Breast epithelium (tissue), 4 donors: ENCODE measurements at regions of chr4 and their contacts with region 1.

Region 1: GRCh38 chr4:21009956-21010355 is 309.7 kb downstream of the PACRGL start:
- DNase-seq: no peak
- H3K4me3 ChIP-seq: no peak overlapping the region
- H3K27ac ChIP-seq: no peak overlapping the region
- H3K4me1 ChIP-seq: no peaks in the 10 kb centered on the region
- H3K27me3 ChIP-seq: no peaks in the 10 kb centered on the region
- CTCF ChIP-seq: no peak
- POLR2A ChIP-seq: no peak

Region 2: GRCh38 chr4:21067351-21067750 is 57.4 kb after region 1 on chr4:
- intact Hi-C with region 1: loop called (anchors 2 kb)
- DNase-seq: no peak
- H3K4me3 ChIP-seq: no peak overlapping the region
- H3K27ac ChIP-seq: no peak overlapping the region
- H3K4me1 ChIP-seq: no peaks in the 10 kb centered on the region
- H3K27me3 ChIP-seq: no peaks in the 10 kb centered on the region
- CTCF ChIP-seq: no peak
- POLR2A ChIP-seq: no peak

Region 3: GRCh38 chr4:21765810-21766407 is 756.0 kb after region 1 on chr4:
- intact Hi-C with region 1: no loop called
- DNase-seq: no peak
- H3K4me3 ChIP-seq: no peak overlapping the region
- H3K27ac ChIP-seq: no peak overlapping the region
- H3K4me1 ChIP-seq: no peaks in the 10 kb centered on the region
- H3K27me3 ChIP-seq: no peaks in the 10 kb centered on the region
- CTCF ChIP-seq: peak in 2 of 3 donors; percentile 49 to 60
- POLR2A ChIP-seq: no peak